ENCODE measurements at regions of chrX and their contacts with region 1.

Region 1: DNA sequence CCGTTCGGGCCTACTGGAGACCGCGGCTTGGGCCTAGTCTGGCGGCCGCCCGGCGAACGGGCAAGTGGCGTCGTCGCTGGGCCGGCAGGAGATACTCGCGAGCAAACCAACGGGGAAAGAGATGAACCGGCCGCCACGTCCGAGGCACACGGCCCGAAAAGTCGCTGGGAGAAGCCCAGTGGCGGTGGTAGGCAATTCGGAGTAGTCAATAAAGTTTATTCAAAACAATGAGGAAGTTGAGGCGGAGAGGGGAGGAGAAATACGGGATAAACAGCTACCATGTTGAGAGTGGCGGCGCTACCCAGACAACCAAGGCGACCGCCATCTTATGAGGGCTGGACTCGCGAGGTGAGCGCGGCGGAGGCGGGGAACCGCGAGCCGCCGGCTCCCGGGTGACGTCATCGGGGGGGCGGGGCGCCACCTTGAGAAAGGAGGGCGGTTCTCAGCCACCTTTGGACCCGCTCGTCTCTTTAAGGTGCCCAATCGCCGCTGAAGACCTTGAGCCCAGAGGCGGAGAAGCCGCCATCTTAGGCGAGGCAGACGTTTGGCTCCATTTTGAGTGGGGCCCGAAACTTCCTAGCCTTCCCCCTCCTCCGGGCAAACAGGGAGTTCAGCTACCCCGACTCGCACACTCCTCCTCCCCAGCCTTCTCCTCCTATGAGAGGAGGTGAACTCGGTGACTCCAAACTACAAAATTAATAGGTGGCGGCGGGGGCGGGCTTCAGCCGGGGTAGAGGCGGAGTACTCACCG is at the start of gene PHF8:
- H3K4me3 Mint-ChIP-seq: peak within 1 kb of the TSS; percentile 90
- H3K27ac Mint-ChIP-seq: peak within 1 kb of the TSS; percentile 95
- H3K4me1 Mint-ChIP-seq: peaks cover 13% of the 10 kb centered on the region
- H3K27me3 Mint-ChIP-seq: no peaks in the 10 kb centered on the region

Region 2: DNA sequence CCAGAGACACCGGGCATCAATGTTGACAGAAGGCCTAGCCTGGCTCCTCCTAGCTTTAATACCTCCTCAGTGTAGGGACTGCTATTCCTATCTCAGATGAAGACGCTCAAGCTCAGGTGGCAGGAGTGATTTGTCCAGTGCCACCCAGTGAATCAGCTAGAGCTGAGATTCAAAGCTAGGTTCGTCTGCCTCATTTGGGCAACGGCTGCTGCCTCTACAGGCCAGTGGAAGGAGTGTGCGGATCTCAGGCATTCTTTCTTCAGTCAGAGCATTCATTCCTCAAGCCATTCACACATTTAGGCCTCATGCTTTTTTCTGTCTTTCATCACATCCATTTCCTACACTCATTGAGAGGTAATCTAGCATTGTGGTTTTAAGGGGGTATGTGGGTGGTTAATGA is 403.2 kb after region 1 on chrX:
- intact Hi-C with region 1: no loop called
- H3K4me3 Mint-ChIP-seq: no peak overlapping the region
- H3K27ac Mint-ChIP-seq: no peak overlapping the region
- H3K4me1 Mint-ChIP-seq: peaks cover 5% of the 10 kb centered on the region
- H3K27me3 Mint-ChIP-seq: no peaks in the 10 kb centered on the region

Region 3: GRCh38 chrX:54529552-54530357 is 485.5 kb after region 1 on chrX and contains the start of gene GNL3L:
- intact Hi-C with region 1: loop called (anchors 5 kb)
- H3K4me3 Mint-ChIP-seq: peak within 1 kb of the TSS; percentile 79
- H3K27ac Mint-ChIP-seq: peak within 1 kb of the TSS; percentile 88
- H3K4me1 Mint-ChIP-seq: peaks cover 26% of the 10 kb centered on the region
- H3K27me3 Mint-ChIP-seq: no peaks in the 10 kb centered on the region